CD4-positive, alpha-beta memory T cell (primary cell): ENCODE measurements at regions of chr22 and their contacts with region 1.

Region 1: GRCh38 chr22:24011735-24012068 is 598 bp downstream of the CABIN1 start:
- DNase-seq: peak in 1 of 5 donors; percentile 6
- H3K4me3 ChIP-seq: peak overlapping the region; percentile 68 to 86
- H3K4me3 Mint-ChIP-seq: peak overlapping the region; percentile 94 to 98 (median 98)
- H3K27ac ChIP-seq: peak overlapping the region; percentile 78
- H3K27ac Mint-ChIP-seq: peak overlapping the region; percentile 94 to 99 (median 97)
- H3K4me1 ChIP-seq: peaks cover 23% of the 10 kb centered on the region
- H3K4me1 Mint-ChIP-seq: peaks cover 26 to 57% (median 35%) of the 10 kb centered on the region in 4 donors
- H3K27me3 ChIP-seq: no peaks in the 10 kb centered on the region
- H3K27me3 Mint-ChIP-seq: peaks cover 0 to 5% of the 10 kb centered on the region in 2 donors

Region 2: DNA sequence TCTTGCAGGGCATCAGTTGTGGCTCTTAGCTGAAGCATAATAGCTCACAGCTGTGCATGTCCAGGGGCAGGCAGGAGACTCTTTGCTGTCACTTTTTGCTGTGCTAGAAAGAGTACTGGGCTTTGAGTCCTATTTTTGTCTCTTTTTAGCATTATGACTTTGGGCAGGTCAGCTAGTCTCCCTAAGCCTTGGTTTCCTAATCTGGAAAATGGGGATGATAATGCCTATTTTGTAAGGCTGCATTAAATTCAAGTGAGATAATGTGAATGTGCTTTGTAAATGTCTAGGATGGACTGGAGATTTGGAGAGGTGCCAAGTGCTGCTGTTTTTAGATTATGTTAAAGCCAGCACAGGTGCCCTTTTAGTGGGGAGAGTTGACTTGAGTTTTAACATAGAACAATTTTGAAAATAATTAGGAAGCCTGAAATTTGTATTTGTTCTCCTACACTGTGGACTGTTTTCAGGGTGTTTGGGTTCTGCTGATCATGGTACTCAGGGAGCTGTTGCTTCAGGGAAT is 18.5 kb after region 1 on chr22:
- CTCF ChIA-PET with region 1: no interaction called
- POLR2A ChIA-PET with region 1: interaction called, 11 read pairs
- intact Hi-C with region 1: no loop called
- DNase-seq: no peak
- H3K4me3 ChIP-seq: no peak overlapping the region
- H3K4me3 Mint-ChIP-seq: no peak overlapping the region
- H3K27ac ChIP-seq: no peak overlapping the region
- H3K27ac Mint-ChIP-seq: peak overlapping the region in 1 of 7 donors; percentile 25
- H3K4me1 ChIP-seq: no peaks in the 10 kb centered on the region
- H3K4me1 Mint-ChIP-seq: peaks cover 14 to 34% (median 23%) of the 10 kb centered on the region in 4 donors
- H3K27me3 ChIP-seq: no peaks in the 10 kb centered on the region
- H3K27me3 Mint-ChIP-seq: no peaks in the 10 kb centered on the region